Activated T-helper 1 cell treated with anti-CD3 and anti-CD28 coated beads, Interleukin-12 subunit alpha, Interleukin-12 subunit beta, Interleukin-2, Interleukin-4 antibody, amounts not matched to agents 30 ng/mL and 10 ng/mL and 1 ng/mL, durations not matched to agents 14 hours and 24 hours and 36 hours (primary cell): ENCODE measurements at regions of chr12 and their contacts with region 1.

Region 1: GRCh38 chr12:15882118-15882971 is at the start of gene STRAP:
- DNase-seq: peak; percentile 94
- H3K4me3 Mint-ChIP-seq: peak within 1 kb of the TSS; percentile 97
- H3K27ac Mint-ChIP-seq: peak within 1 kb of the TSS; percentile 99
- H3K4me1 Mint-ChIP-seq: peaks cover 59% of the 10 kb centered on the region
- H3K27me3 Mint-ChIP-seq: no peaks in the 10 kb centered on the region
- total RNA-seq, gene STRAP: 147 and 156 TPM in 2 replicates

Region 2: DNA sequence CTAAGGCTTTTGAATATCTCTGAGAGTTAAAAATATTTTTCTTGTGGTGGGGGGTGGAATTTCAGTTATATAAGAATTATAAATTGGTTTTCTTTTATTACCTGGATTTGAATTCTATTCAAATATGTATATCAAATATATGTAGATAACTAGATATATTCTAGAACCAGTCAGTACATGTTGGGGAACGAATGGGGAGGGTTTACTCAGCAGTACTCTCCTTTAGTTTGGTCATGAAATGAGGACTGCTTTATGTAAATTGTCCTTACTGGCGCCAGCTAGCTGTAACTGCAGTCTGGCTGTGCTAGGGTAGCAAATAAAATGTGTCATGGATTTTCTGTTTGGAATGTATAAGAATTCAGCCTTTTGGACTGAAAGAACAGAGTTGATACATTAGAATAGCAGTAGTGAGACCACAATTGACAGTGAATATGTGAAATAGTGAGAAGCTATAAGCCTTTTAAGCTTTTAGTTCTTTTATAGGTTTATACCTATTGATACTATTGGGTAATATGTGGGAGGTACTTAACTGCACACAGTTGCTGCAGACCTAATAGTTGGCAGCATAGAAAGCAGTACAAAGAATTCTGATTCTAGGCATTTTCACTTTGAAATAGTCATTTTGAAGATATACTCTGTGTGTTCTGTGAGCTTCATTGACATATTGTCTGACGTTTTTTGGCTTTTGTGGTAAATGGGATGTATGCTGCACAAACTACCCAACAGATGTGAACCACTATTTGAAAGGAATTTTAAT is 1487.8 kb before region 1 on chr12:
- intact Hi-C with region 1: loop called (anchors 10 kb)
- DNase-seq: peak; percentile 38
- H3K4me3 Mint-ChIP-seq: peak overlapping the region; percentile 64
- H3K27ac Mint-ChIP-seq: peak overlapping the region; percentile 89
- H3K4me1 Mint-ChIP-seq: peaks cover 87% of the 10 kb centered on the region
- H3K27me3 Mint-ChIP-seq: no peaks in the 10 kb centered on the region

Region 3: DNA sequence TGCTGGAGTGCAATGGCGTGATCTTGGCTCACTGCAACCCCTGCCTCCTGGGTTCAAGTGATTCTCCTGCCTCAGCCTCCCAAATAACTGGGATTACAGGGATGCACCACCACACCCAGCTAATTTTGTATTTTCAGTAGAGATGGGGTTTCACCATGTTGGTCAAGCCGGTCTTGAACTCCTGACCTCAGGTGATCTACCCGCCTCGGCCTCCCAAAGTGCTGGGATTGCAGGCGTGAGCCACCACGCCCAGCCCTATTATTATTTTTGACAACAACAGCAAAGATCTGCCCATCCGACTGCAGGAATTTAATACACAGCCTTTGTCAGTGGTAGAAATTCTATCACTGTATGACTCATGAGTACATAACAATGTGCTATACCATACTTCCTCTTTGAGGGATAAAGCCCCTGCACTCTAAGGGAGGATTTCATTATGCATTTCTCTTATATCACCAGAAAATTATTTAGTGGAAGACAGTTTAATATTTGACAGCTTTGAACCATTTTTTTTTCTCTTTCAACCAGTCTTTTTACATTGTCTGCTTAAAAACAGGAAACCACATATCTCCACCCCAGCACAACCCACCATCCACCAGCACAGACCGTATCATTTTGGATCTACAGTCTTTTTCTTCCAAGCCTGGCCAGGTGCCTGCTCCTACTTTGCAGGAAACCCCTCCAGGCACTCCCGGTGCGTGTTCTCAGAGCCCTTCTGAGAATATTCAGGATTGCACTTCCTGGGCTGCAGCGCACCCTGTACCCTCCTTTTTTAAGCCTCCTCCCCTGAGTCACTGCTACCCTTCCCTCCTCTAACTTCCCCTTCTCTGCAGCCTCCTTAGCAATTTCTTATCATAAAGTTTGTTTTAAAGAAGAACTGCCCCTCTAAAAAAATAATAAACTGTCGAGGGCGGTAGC is 921.5 kb before region 1 on chr12:
- intact Hi-C with region 1: loop called (anchors 5 kb)
- DNase-seq: peak; percentile 34
- H3K4me3 Mint-ChIP-seq: peak overlapping the region; percentile 97
- H3K27ac Mint-ChIP-seq: peak overlapping the region; percentile 97
- H3K4me1 Mint-ChIP-seq: peaks cover 68% of the 10 kb centered on the region
- H3K27me3 Mint-ChIP-seq: no peaks in the 10 kb centered on the region

Region 4: GRCh38 chr12:15590180-15590826 is 292.0 kb before region 1 on chr12:
- intact Hi-C with region 1: loop called (anchors 1 kb)
- DNase-seq: peak; percentile 42
- H3K4me3 Mint-ChIP-seq: peak overlapping the region; percentile 72
- H3K27ac Mint-ChIP-seq: no peak overlapping the region
- H3K4me1 Mint-ChIP-seq: peaks cover 9% of the 10 kb centered on the region
- H3K27me3 Mint-ChIP-seq: no peaks in the 10 kb centered on the region

Region 5: DNA sequence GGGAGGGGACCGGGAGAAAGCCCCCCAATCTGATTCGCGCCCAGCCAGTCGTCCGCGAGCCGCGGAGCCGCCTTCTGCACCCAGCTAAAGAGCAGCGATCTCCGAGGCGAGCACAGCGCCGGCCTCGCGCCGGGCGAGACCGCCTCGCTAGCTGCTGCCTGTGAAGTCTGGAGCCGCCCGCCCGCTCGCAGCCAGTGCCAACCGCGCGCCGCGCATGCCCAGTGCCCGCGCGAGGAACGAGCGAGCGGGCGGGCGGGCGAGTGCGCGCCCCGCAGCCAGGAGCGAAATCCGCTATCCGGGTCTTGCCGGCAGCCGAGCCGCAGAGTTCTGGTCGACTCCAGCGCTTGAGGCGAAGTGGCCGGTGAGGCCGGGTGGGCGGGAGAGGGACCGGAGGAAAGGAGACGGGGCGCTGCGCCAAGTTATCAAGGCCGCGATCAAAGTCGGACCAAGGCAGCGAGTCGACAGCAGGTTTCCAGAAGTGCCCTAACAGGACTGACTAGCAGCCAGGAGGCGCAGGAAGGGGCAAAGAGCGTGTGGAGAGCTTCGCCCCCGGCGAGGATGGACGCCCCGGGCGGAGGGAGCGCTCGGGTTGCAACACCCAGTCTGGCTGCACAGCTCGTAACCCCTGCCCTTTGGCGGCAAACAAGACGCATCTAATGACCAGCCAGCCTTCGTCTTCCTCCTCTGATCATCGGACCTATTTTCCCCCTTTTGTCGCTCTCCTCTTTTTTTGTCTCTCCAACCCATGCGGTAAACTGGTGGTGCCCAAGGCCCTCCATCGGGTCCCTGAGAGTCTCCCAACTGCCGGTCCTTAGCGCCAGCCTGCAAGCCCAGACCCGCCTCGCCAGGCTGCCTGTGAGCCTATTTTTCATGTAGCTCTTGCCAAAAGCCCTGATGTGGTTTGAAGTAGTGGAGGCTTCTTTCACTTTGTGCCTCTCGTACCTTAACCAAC is 92.8 kb before region 1 on chr12 and contains the start of gene EPS8:
- intact Hi-C with region 1: loop called (anchors 1 kb)
- DNase-seq: peak; percentile 83
- H3K4me3 Mint-ChIP-seq: peak within 1 kb of the TSS; percentile 91
- H3K27ac Mint-ChIP-seq: peak within 1 kb of the TSS; percentile 81
- H3K4me1 Mint-ChIP-seq: peaks cover 19% of the 10 kb centered on the region
- H3K27me3 Mint-ChIP-seq: peaks cover 73% of the 10 kb centered on the region
- total RNA-seq, gene EPS8: 1.9 and 3.1 TPM in 2 replicates

Region 6: GRCh38 chr12:15899282-15899870 is 17.0 kb after region 1 on chr12:
- intact Hi-C with region 1: loop called (anchors 1 kb)
- DNase-seq: no peak
- H3K4me3 Mint-ChIP-seq: no peak overlapping the region
- H3K27ac Mint-ChIP-seq: no peak overlapping the region
- H3K4me1 Mint-ChIP-seq: peaks cover 12% of the 10 kb centered on the region
- H3K27me3 Mint-ChIP-seq: no peaks in the 10 kb centered on the region

Region 7: GRCh38 chr12:15966426-15966825 is 84.1 kb after region 1 on chr12:
- intact Hi-C with region 1: no loop called
- DNase-seq: no peak
- H3K4me3 Mint-ChIP-seq: no peak overlapping the region
- H3K27ac Mint-ChIP-seq: no peak overlapping the region
- H3K4me1 Mint-ChIP-seq: no peaks in the 10 kb centered on the region
- H3K27me3 Mint-ChIP-seq: no peaks in the 10 kb centered on the region